Activated CD8-positive, alpha-beta T cell treated with anti-CD3 and anti-CD28 coated beads, Interleukin-2, amount 10 ng/mL, durations not matched to agents 7 days and 5 days (primary cell): ENCODE measurements at regions of chr2 and their contacts with region 1.

Region 1: GRCh38 chr2:68774569-68775271 is 40.1 kb downstream of the ARHGAP25 start:
- DNase-seq: peak; percentile 77
- ATAC-seq: peak; percentile 84
- H3K4me3 Mint-ChIP-seq: peak overlapping the region; percentile 81
- H3K27ac Mint-ChIP-seq: peak overlapping the region; percentile 97
- H3K4me1 Mint-ChIP-seq: peaks cover 86% of the 10 kb centered on the region
- H3K27me3 Mint-ChIP-seq: no peaks in the 10 kb centered on the region

Region 2: GRCh38 chr2:68742626-68743415 is 31.9 kb before region 1 on chr2:
- CTCF ChIA-PET with region 1: interaction called, 448 read pairs
- POLR2A ChIA-PET with region 1: interaction called, 3 read pairs
- DNase-seq: peak; percentile 23
- ATAC-seq: no peak
- H3K4me3 Mint-ChIP-seq: no peak overlapping the region
- H3K27ac Mint-ChIP-seq: peak overlapping the region; percentile 12
- H3K4me1 Mint-ChIP-seq: peaks cover 93% of the 10 kb centered on the region
- H3K27me3 Mint-ChIP-seq: no peaks in the 10 kb centered on the region

Region 3: GRCh38 chr2:68828887-68829708 is 54.4 kb after region 1 on chr2:
- CTCF ChIA-PET with region 1: interaction called, 14 read pairs
- POLR2A ChIA-PET with region 1: no interaction called
- DNase-seq: peak; percentile 83
- ATAC-seq: peak; percentile 70
- H3K4me3 Mint-ChIP-seq: peak overlapping the region; percentile 71
- H3K27ac Mint-ChIP-seq: peak overlapping the region; percentile 90
- H3K4me1 Mint-ChIP-seq: peaks cover 65% of the 10 kb centered on the region
- H3K27me3 Mint-ChIP-seq: no peaks in the 10 kb centered on the region

Region 4: DNA sequence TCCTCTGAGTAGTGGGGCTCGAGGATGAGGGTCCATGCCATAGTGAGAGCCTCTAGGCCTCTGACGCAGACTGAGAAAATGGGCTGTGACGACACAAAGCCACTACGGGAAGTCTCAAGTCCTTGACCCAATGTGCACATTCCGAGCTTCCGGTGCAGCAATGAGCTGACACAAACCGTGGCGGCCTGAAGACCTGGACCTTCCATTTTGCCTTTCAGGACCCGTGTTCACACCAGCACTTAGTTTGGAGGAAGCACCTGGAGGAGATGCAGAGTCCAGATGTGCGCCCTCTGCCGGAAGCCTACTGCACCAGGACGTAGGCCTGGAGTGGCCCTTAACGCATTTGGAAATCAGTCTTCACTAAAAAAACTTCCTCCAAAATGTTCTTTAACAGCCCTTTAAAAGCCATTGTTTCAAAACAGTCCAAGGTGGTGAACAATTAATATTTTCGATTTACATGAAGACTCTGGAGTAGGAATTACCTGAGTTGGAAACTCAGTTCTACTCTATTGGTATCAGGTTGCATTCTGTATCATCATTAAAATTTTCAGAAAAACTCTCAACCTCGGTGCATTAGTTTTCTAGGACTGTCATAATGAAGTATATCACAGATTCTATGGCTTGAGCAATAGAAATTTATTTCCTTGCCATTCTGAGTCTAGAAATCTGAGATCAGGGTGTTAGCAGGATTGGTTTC is 62.6 kb after region 1 on chr2:
- CTCF ChIA-PET with region 1: interaction called, 20 read pairs
- POLR2A ChIA-PET with region 1: no interaction called
- DNase-seq: peak; percentile 80
- ATAC-seq: peak; percentile 82
- H3K4me3 Mint-ChIP-seq: no peak overlapping the region
- H3K27ac Mint-ChIP-seq: no peak overlapping the region
- H3K4me1 Mint-ChIP-seq: peaks cover 44% of the 10 kb centered on the region
- H3K27me3 Mint-ChIP-seq: no peaks in the 10 kb centered on the region

Region 5: DNA sequence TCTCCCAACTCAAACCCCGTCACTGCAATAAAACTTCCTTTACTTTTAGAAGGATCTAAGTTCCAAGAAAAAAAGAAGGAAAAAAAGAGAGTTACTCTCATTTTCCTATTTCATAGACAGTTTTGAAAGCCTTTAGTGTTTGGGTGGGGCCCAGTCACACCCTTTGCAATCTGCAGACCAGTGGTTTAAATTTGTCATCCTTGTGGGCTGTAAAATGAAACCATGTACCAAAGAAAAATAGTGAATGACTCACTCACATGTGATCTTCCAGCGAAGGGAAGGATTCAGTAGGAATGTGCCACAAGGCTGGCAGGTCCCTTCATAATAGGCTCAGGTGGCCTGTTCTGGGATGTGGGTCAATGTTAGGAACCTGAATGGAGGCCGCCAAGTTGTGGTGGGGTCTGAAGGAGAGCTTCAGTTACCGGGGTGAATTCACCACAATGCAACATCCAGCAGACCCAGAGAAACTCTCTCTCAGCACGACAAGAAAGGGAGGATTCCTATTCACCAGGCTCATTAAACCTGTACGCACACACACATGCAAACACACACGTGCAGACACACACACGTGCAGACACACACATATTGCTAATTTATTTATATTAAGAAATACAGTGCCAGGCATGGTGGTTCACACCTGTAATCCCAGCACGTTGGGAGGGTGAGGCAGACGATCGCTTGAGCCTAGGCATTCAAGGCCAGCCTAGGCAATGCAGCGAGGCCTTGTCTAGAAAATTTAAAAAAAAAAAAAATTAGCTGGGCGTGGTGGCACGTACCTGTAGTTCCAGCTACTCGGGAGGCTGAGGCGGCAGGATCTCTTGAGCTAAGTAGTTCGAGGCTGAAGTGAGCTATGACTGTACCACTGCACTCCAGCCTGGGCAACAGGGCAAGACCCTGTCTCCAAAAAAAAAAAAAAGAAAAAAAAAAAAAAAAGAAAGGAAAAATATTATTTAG is 995.8 kb after region 1 on chr2:
- CTCF ChIA-PET with region 1: no interaction called
- POLR2A ChIA-PET with region 1: no interaction called
- DNase-seq: peak; percentile 47
- ATAC-seq: peak; percentile 41
- H3K4me3 Mint-ChIP-seq: peak overlapping the region; percentile 10
- H3K27ac Mint-ChIP-seq: peak overlapping the region; percentile 82
- H3K4me1 Mint-ChIP-seq: peaks cover 79% of the 10 kb centered on the region
- H3K27me3 Mint-ChIP-seq: no peaks in the 10 kb centered on the region